ENCODE measurements at regions of chr2 and their contacts with region 1.

Region 1: DNA sequence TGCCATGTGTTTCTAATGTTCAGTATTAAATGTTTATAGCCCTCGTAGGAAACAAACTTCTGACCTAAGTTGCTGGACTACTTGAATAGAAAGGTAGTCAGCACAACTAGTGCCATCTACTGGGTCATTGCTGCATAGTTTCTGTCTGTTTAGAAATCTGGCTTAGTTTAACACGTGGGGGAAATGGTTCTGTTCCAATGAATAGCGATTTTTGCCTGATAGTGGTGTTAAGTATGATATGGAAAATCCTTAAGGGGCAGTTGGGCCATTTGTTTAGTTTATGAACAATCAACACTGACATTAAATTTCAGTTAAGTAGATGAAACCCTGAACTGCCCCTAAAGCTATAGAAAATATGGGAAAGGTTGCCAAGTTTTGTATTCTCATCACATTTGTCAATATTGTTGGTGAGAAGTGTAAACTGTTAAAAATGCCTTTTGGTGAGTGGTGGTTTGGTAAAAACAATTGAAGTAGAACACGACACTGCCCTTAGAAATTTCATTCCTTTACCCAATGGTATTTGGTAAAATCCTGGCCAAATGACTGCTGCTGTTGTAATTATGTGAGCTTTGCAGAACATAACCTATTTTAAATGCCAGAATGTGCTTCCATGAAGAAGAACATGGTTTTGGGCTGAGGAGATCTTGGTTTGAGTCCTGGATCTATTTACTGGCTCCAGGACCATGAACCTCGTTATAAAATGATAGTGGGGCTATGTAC is 13.2 kb downstream of the NABP1 start:
- DNase-seq: no peak
- ATAC-seq: peak; percentile 88
- H3K4me3 ChIP-seq: no peak overlapping the region
- H3K27ac ChIP-seq: no peak overlapping the region
- H3K4me1 ChIP-seq: peaks cover 2 to 6% of the 10 kb centered on the region in 2 donors
- H3K27me3 ChIP-seq: no peaks in the 10 kb centered on the region

Region 2: GRCh38 chr2:191566344-191566743 is 124.8 kb before region 1 on chr2:
- intact Hi-C with region 1: loop called (anchors 2 kb)
- DNase-seq: peak in 1 of 2 donors; percentile 64
- ATAC-seq: peak; percentile 78
- H3K4me3 ChIP-seq: no peak overlapping the region
- H3K27ac ChIP-seq: no peak overlapping the region
- H3K4me1 ChIP-seq: no peaks in the 10 kb centered on the region
- H3K27me3 ChIP-seq: no peaks in the 10 kb centered on the region

Region 3: DNA sequence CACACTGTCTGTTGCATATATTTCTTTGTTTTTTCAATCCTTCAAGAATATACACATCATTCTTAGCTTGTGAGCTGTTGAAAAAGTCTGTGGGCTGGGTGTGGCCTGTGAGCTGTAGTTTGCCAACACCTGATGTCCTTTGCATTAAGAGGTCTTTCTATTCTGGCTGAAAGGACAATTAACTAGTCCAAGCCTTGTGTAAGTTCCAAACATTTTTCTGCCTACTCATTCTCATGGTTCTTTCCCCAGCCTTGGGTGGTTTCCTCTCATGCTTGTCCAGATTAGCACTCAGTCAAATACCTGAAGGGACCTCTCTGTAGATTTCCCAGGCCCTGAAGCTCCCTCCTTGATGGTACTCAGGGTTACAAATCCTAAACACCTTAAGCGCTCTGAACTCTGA is 71.0 kb before region 1 on chr2:
- intact Hi-C with region 1: loop called in 1 of 2 experiments (anchors 5 kb)
- DNase-seq: no peak
- ATAC-seq: no peak
- H3K4me3 ChIP-seq: no peak overlapping the region
- H3K27ac ChIP-seq: no peak overlapping the region
- H3K4me1 ChIP-seq: peaks cover 0 to 2% of the 10 kb centered on the region in 2 donors
- H3K27me3 ChIP-seq: no peaks in the 10 kb centered on the region